Activated CD4-positive, alpha-beta T cell treated with anti-CD3 and anti-CD28 coated beads, Interleukin-2, amount 10 ng/mL, durations not matched to agents 24 days and 14 days (primary cell): ENCODE measurements at regions of chr22 and their contacts with region 1.

Region 1: GRCh38 chr22:50148991-50149721 is 21.4 kb upstream of the PANX2 start:
- DNase-seq: peak; percentile 91
- H3K4me3 Mint-ChIP-seq: no peak overlapping the region
- H3K27ac Mint-ChIP-seq: no peak overlapping the region
- H3K4me1 Mint-ChIP-seq: peaks cover 2% of the 10 kb centered on the region
- H3K27me3 Mint-ChIP-seq: no peaks in the 10 kb centered on the region

Region 2: DNA sequence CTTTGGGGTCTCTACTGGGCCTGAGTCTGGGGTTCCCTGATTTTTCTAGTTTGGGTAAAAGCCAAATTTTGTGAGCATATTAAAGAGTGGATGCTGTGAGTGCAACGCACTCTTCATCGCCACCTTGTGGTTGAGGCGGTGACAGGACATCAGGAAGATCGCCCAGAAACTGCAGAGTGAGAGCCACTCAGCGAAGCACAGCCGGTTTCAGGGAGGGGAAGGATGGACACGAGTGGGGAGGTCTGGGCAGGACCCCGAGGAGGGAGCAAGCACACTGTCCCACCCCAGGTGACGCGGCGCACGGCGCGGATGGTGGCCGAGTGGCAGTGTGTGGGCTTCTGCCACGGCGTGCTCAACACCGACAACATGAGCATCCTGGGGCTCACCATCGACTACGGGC is 60.7 kb after region 1 on chr22:
- intact Hi-C with region 1: loop called (anchors 1 kb)
- DNase-seq: peak; percentile 91
- H3K4me3 Mint-ChIP-seq: no peak overlapping the region
- H3K27ac Mint-ChIP-seq: no peak overlapping the region
- H3K4me1 Mint-ChIP-seq: peaks cover 10% of the 10 kb centered on the region
- H3K27me3 Mint-ChIP-seq: no peaks in the 10 kb centered on the region

Region 3: DNA sequence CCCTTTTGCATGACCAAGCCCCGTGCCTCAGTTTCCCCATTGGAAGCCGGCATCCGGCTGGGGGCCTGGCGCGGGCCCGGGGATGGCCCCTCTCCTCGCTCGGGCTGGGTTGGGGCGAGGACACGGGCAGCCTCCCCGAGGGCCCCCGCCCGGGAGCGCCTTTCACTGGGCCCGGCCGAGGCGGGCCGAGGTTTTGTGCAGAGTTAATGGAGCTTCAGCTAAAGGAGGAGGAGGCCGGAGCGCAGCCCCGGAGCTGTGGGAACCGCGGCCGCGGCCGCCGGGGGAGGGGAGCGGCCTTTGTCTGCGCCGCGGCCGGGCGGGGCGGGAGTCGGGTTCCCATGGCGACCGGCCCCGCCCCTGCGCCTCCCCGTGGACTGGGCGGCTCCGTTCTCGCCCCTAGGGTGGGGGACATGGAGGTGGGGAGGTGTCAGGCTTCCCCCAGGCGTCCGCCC is 122.4 kb after region 1 on chr22:
- intact Hi-C with region 1: no loop called
- DNase-seq: peak; percentile 90
- H3K4me3 Mint-ChIP-seq: no peak overlapping the region
- H3K27ac Mint-ChIP-seq: no peak overlapping the region
- H3K4me1 Mint-ChIP-seq: peaks cover 13% of the 10 kb centered on the region
- H3K27me3 Mint-ChIP-seq: peaks cover 6% of the 10 kb centered on the region

Region 4: GRCh38 chr22:50282361-50282760 is 133.2 kb after region 1 on chr22:
- intact Hi-C with region 1: no loop called
- DNase-seq: no peak
- H3K4me3 Mint-ChIP-seq: no peak overlapping the region
- H3K27ac Mint-ChIP-seq: no peak overlapping the region
- H3K4me1 Mint-ChIP-seq: no peaks in the 10 kb centered on the region
- H3K27me3 Mint-ChIP-seq: no peaks in the 10 kb centered on the region